T-cell (primary cell): ENCODE measurements at regions of chr10 and their contacts with region 1.

Region 1: GRCh38 chr10:91251430-91252056 is 31.1 kb downstream of the PCGF5 start:
- DNase-seq: peak in 34 of 35 experiments; percentile 18 to 82 (median 48)
- ATAC-seq: peak; percentile 63 to 77 (median 72)
- H3K4me3 ChIP-seq: no peak overlapping the region
- H3K4me3 Mint-ChIP-seq: no peak overlapping the region
- H3K27ac ChIP-seq: no peak overlapping the region
- H3K27ac Mint-ChIP-seq: no peak overlapping the region
- H3K4me1 ChIP-seq: peaks cover 3 to 8% of the 10 kb centered on the region in 2 experiments
- H3K4me1 Mint-ChIP-seq: peaks cover 0 to 6% (median 3%) of the 10 kb centered on the region in 3 donors
- H3K27me3 ChIP-seq: no peaks in the 10 kb centered on the region
- H3K27me3 Mint-ChIP-seq: no peaks in the 10 kb centered on the region

Region 2: GRCh38 chr10:90879062-90879461 is 372.5 kb before region 1 on chr10:
- CTCF ChIA-PET with region 1: interaction called, 8 to 21 read pairs
- POLR2A ChIA-PET with region 1: no interaction called
- DNase-seq: no peak
- ATAC-seq: no peak
- H3K4me3 ChIP-seq: no peak overlapping the region
- H3K4me3 Mint-ChIP-seq: no peak overlapping the region
- H3K27ac ChIP-seq: no peak overlapping the region
- H3K27ac Mint-ChIP-seq: no peak overlapping the region
- H3K4me1 ChIP-seq: no peaks in the 10 kb centered on the region
- H3K4me1 Mint-ChIP-seq: peaks cover 5 to 14% (median 9%) of the 10 kb centered on the region in 3 donors
- H3K27me3 ChIP-seq: no peaks in the 10 kb centered on the region
- H3K27me3 Mint-ChIP-seq: no peaks in the 10 kb centered on the region

Region 3: GRCh38 chr10:91006001-91006751 is 245.4 kb before region 1 on chr10:
- CTCF ChIA-PET with region 1: interaction called, 112 to 248 read pairs
- POLR2A ChIA-PET with region 1: interaction called in 1 of 2 experiments, 3 read pairs
- DNase-seq: peak; percentile 15 to 84 (median 52)
- ATAC-seq: peak; percentile 78 to 86 (median 84)
- H3K4me3 ChIP-seq: no peak overlapping the region
- H3K4me3 Mint-ChIP-seq: peak overlapping the region in 2 of 3 donors; percentile 31 to 54
- H3K27ac ChIP-seq: peak overlapping the region; percentile 25
- H3K27ac Mint-ChIP-seq: peak overlapping the region; percentile 75 to 80
- H3K4me1 ChIP-seq: peaks cover 6 to 18% of the 10 kb centered on the region in 2 experiments
- H3K4me1 Mint-ChIP-seq: peaks cover 15 to 19% (median 17%) of the 10 kb centered on the region in 3 donors
- H3K27me3 ChIP-seq: no peaks in the 10 kb centered on the region
- H3K27me3 Mint-ChIP-seq: peaks cover under 1 to 4% of the 10 kb centered on the region in 2 donors

Region 4: GRCh38 chr10:91043173-91043910 is 208.2 kb before region 1 on chr10:
- CTCF ChIA-PET with region 1: interaction called in 1 of 2 experiments, 16 read pairs
- POLR2A ChIA-PET with region 1: no interaction called
- DNase-seq: peak in 1 of 35 experiments; percentile 12
- ATAC-seq: no peak
- H3K4me3 ChIP-seq: no peak overlapping the region
- H3K4me3 Mint-ChIP-seq: no peak overlapping the region
- H3K27ac ChIP-seq: no peak overlapping the region
- H3K27ac Mint-ChIP-seq: no peak overlapping the region
- H3K4me1 ChIP-seq: no peaks in the 10 kb centered on the region
- H3K4me1 Mint-ChIP-seq: no peaks in the 10 kb centered on the region
- H3K27me3 ChIP-seq: no peaks in the 10 kb centered on the region
- H3K27me3 Mint-ChIP-seq: peaks cover 5 to 9% of the 10 kb centered on the region in 2 donors

Region 5: DNA sequence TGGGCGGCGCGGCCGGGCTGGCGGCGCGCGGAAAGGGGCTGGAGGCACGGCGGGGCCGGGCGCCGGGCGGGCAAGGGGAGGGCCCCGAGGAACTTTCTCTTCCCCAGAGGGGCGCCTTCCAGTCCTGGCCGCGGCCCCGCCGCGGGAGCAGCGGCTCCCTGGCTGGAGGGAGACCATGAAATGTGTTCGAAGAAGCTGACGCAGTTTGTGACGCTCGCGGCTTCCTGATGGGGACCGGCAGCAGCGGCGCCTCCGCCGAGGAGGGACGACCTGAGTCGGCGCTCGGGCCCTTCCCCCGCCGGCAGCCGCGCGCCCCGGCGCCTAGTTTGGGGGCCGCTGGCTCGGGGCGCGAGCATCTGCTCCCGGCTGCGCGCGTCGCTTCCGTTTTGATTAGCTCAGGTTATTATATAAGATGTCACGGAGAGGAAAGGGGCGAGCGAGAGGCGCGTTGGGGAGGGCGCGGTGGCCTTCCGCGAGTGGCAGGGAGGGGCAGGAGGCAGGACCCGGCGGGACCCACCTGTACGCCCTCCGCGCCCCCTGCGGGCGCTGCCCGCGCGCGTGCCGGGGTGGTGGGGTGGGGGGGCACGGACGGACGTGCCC is 88.2 kb before region 1 on chr10:
- CTCF ChIA-PET with region 1: interaction called in 1 of 2 experiments, 9 read pairs
- POLR2A ChIA-PET with region 1: interaction called in 1 of 2 experiments, 10 read pairs
- DNase-seq: peak; percentile 59 to 94 (median 90)
- ATAC-seq: peak; percentile 62 to 76 (median 66)
- H3K4me3 ChIP-seq: peak overlapping the region; percentile 66 to 74
- H3K4me3 Mint-ChIP-seq: peak overlapping the region; percentile 87 to 91 (median 90)
- H3K27ac ChIP-seq: peak overlapping the region; percentile 90
- H3K27ac Mint-ChIP-seq: peak overlapping the region; percentile 93 to 94
- H3K4me1 ChIP-seq: peaks cover 3 to 16% of the 10 kb centered on the region in 2 experiments
- H3K4me1 Mint-ChIP-seq: peaks cover 55 to 60% (median 58%) of the 10 kb centered on the region in 3 donors
- H3K27me3 ChIP-seq: no peaks in the 10 kb centered on the region
- H3K27me3 Mint-ChIP-seq: no peaks in the 10 kb centered on the region

Region 6: GRCh38 chr10:91420868-91421267 is 169.3 kb after region 1 on chr10:
- CTCF ChIA-PET with region 1: no interaction called
- POLR2A ChIA-PET with region 1: no interaction called
- DNase-seq: no peak
- ATAC-seq: no peak
- H3K4me3 ChIP-seq: no peak overlapping the region
- H3K4me3 Mint-ChIP-seq: no peak overlapping the region
- H3K27ac ChIP-seq: no peak overlapping the region
- H3K27ac Mint-ChIP-seq: no peak overlapping the region
- H3K4me1 ChIP-seq: no peaks in the 10 kb centered on the region
- H3K4me1 Mint-ChIP-seq: peaks cover 0 to 2% (median 2%) of the 10 kb centered on the region in 3 donors
- H3K27me3 ChIP-seq: no peaks in the 10 kb centered on the region
- H3K27me3 Mint-ChIP-seq: no peaks in the 10 kb centered on the region